PC-3 (cell line): ENCODE measurements at regions of chrX and their contacts with region 1.

Region 1: DNA sequence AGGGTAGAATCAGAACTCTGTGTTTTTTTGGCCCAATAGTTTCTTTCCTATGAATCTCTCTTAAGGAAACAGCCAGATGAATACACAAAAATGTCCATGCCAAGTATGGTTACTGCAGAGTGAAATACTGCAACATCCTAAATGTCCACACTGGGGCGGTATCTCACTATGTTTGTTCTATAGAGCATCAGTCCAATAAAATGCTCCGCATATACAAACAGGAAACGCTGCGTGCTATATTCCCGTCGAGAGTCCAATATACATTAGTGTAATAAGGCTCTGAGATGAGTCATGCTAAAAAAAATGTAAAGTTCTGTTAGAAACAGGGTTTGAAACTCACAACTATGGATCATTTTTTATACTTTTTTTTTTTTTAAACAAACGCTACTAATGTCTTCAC is 72.9 kb upstream of the ENOX2 start:
- DNase-seq: peak; percentile 79
- ATAC-seq: peak; percentile 73
- H3K4me3 ChIP-seq: no peak overlapping the region
- H3K27ac ChIP-seq: no peak overlapping the region
- H3K4me1 ChIP-seq: peaks cover 5% of the 10 kb centered on the region; the same call in 1 of the 2 replicates
- H3K27me3 ChIP-seq: no peaks in the 10 kb centered on the region; the same call in 1 of the 2 replicates
- CTCF ChIP-seq: peak; percentile 75

Region 2: DNA sequence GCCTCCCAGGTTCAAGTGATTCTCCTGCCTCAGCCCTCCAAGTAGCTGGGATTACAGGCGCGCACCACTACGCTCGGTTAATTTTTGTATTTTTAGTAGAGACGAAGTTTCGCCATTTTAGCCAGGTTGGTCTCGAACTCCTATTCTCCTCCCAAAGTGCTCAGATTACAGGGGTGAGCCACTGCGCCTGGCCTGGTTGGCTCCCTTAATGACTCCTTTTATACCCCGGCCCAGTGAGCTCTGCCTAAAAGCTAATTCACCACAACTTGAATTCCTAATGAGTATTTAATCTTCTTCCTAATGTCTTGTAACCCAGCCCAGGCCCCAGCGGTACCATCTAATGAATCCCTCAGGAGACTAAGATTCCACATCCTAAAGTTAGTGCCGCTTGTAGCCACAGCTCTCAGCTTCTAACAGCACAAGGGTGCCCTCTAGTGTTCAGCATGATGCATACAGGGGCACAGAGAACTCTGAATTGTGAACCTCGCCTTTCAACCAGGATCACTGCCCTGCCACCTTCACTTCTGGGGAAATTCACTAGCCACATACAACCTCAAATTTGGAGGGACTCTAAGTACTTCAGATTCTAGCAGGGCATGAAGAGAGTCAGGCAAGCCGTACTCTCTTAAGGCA is 657.5 kb after region 1 on chrX:
- CTCF ChIA-PET with region 1: no interaction called
- POLR2A ChIA-PET with region 1: no interaction called
- intact Hi-C with region 1: loop called (anchors 1 kb)
- DNase-seq: peak; percentile 68
- ATAC-seq: peak; percentile 96
- H3K4me3 ChIP-seq: no peak overlapping the region
- H3K27ac ChIP-seq: no peak overlapping the region
- H3K4me1 ChIP-seq: no peaks in the 10 kb centered on the region
- H3K27me3 ChIP-seq: no peaks in the 10 kb centered on the region
- CTCF ChIP-seq: peak; percentile 85

Region 3: GRCh38 chrX:131677655-131678628 is 702.0 kb after region 1 on chrX:
- CTCF ChIA-PET with region 1: no interaction called
- POLR2A ChIA-PET with region 1: no interaction called
- intact Hi-C with region 1: loop called (anchors 1 kb)
- DNase-seq: peak; percentile 57
- ATAC-seq: peak; percentile 64
- H3K4me3 ChIP-seq: no peak overlapping the region
- H3K27ac ChIP-seq: no peak overlapping the region
- H3K4me1 ChIP-seq: no peaks in the 10 kb centered on the region
- H3K27me3 ChIP-seq: no peaks in the 10 kb centered on the region
- CTCF ChIP-seq: peak; percentile 72